ENCODE measurements at regions of chr5 and their contacts with region 1.

Region 1: GRCh38 chr5:113513384-113514288 is at the start of gene YTHDC2:
- DNase-seq: peak; percentile 91
- H3K4me3 Mint-ChIP-seq: peak within 1 kb of the TSS; percentile 74
- H3K27ac Mint-ChIP-seq: peak within 1 kb of the TSS; percentile 68
- H3K4me1 Mint-ChIP-seq: peaks cover 24% of the 10 kb centered on the region
- H3K27me3 Mint-ChIP-seq: peaks cover 18% of the 10 kb centered on the region
- CTCF ChIP-seq: no peak
- total RNA-seq, gene YTHDC2: 31.1 and 31.8 TPM in 2 replicates

Region 2: GRCh38 chr5:112995764-112996618 is 517.6 kb before region 1 on chr5:
- CTCF ChIA-PET with region 1: interaction called, 9 read pairs
- intact Hi-C with region 1: loop called (anchors 5 kb)
- DNase-seq: peak; percentile 79
- H3K4me3 Mint-ChIP-seq: no peak overlapping the region
- H3K27ac Mint-ChIP-seq: no peak overlapping the region
- H3K4me1 Mint-ChIP-seq: no peaks in the 10 kb centered on the region
- H3K27me3 Mint-ChIP-seq: no peaks in the 10 kb centered on the region
- CTCF ChIP-seq: peak; percentile 79

Region 3: DNA sequence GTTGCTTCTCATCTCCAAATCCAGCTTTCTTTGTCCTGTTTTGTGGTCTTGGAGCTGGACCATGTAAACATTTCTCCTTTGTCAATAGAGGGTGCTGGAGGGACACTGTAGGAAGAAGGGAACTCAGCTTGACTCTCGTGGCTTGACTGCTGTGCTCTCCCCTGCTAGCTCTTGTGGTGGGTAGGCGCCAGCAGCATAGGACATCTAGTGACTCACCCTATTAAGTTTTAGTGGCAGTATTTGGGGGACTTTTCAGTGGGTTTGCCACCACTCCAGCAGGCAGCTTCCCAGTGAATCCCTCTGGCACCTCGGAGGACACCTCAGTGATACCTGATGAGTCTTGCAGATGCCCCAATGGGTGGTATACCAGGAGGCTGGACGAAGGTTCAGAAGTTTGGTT is 176.7 kb before region 1 on chr5:
- CTCF ChIA-PET with region 1: interaction called, 46 read pairs
- intact Hi-C with region 1: loop called (anchors 1 kb)
- DNase-seq: peak; percentile 54
- H3K4me3 Mint-ChIP-seq: no peak overlapping the region
- H3K27ac Mint-ChIP-seq: no peak overlapping the region
- H3K4me1 Mint-ChIP-seq: no peaks in the 10 kb centered on the region
- H3K27me3 Mint-ChIP-seq: no peaks in the 10 kb centered on the region
- CTCF ChIP-seq: peak; percentile 66

Region 4: GRCh38 chr5:113378959-113379541 is 134.6 kb before region 1 on chr5:
- CTCF ChIA-PET with region 1: interaction called, 13 read pairs
- intact Hi-C with region 1: loop called (anchors 1 kb)
- DNase-seq: peak; percentile 69
- H3K4me3 Mint-ChIP-seq: no peak overlapping the region
- H3K27ac Mint-ChIP-seq: no peak overlapping the region
- H3K4me1 Mint-ChIP-seq: no peaks in the 10 kb centered on the region
- H3K27me3 Mint-ChIP-seq: no peaks in the 10 kb centered on the region
- CTCF ChIP-seq: peak; percentile 73

Region 5: DNA sequence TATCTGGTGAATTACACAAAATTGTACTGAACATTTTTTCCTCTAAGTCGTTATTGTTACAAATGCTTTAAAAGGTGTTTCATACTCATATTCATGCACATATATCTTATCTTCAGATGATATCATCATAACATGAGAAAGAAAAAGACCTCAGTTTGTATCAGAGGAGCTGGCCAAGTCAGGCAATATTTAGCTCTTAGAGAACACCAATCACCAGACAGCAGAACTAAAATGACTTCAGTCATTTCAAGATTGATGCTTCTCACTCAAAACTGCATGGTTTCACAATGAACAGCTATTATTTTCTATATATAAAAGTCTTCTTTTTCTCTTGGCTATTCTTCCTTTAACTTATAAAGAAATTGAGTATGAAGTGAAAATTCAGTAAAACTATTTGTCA is 123.4 kb before region 1 on chr5:
- CTCF ChIA-PET with region 1: no interaction called
- intact Hi-C with region 1: no loop called
- DNase-seq: no peak
- H3K4me3 Mint-ChIP-seq: no peak overlapping the region
- H3K27ac Mint-ChIP-seq: no peak overlapping the region
- H3K4me1 Mint-ChIP-seq: no peaks in the 10 kb centered on the region
- H3K27me3 Mint-ChIP-seq: peaks cover 11% of the 10 kb centered on the region
- CTCF ChIP-seq: no peak

Region 6: DNA sequence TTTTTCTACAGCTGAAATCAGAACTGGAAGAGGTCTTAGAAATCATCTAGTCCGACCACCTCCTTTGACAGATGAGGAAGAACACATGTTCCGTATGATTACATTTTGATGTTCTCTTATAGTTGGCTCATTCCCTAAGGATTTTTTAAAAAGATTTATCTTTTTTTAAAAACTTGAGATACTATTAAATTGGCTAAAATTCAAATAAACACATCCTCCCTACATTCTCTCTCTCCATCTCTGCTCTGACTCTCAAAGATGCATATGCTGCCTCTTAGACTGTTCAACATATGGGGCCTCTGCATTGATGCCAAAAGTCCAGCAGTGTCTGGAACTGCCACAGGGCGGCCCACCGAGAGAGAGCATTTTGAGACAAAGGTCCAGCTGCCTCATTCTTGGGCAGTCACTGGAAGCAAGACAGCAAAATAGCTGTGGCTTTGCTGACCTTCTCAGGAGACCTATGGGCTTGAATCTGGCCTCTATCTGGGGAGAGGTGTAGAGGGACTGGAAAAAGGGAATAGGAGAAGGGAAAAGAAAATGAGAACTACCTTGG is 66.1 kb before region 1 on chr5:
- CTCF ChIA-PET with region 1: interaction called, 7 read pairs
- intact Hi-C with region 1: loop called (anchors 1 kb)
- DNase-seq: peak; percentile 45
- H3K4me3 Mint-ChIP-seq: no peak overlapping the region
- H3K27ac Mint-ChIP-seq: no peak overlapping the region
- H3K4me1 Mint-ChIP-seq: no peaks in the 10 kb centered on the region
- H3K27me3 Mint-ChIP-seq: no peaks in the 10 kb centered on the region
- CTCF ChIP-seq: peak; percentile 39

Region 7: GRCh38 chr5:113574417-113574816 is 60.8 kb after region 1 on chr5:
- CTCF ChIA-PET with region 1: no interaction called
- intact Hi-C with region 1: no loop called
- DNase-seq: peak; percentile 33
- H3K4me3 Mint-ChIP-seq: no peak overlapping the region
- H3K27ac Mint-ChIP-seq: no peak overlapping the region
- H3K4me1 Mint-ChIP-seq: no peaks in the 10 kb centered on the region
- H3K27me3 Mint-ChIP-seq: no peaks in the 10 kb centered on the region
- CTCF ChIP-seq: no peak

Measured in Calu3 (cell line).